BJ (cell line): ENCODE measurements at regions of chr4 and their contacts with region 1.

Region 1: DNA sequence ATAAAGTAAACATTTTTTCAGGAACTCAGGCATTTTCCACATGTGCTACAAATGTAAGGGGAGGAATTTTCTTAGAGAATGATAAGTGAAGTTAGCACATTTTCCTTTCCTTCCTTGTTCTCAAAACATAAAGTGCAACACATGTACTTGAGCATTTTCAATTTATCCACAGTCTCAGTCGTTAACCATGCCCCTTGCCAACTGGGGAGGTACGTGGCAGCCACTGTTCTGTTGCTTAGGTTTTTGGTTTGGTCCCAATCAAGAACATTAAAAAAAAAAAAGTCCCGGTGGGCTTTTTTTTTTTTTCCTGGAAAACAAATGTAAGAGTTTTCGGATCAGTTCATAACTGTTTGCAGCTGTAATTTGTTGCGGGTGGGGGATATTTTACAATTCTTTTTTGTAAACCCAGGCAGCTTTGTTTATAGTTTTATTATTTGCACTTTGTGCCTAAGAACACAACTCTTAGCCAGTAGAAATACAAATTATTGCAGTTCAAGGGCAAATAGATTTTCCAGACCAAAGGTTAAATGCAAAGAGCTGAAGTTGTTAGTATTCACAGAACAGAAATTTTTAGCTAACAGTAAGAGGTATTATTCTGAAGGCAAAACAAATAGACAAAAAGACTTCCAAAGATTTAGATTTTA is 112.1 kb upstream of the NAP1L5 start:
- DNase-seq: no peak
- H3K4me3 ChIP-seq: no peak overlapping the region
- H3K27me3 ChIP-seq: no peaks in the 10 kb centered on the region
- CTCF ChIP-seq: no peak

Region 2: DNA sequence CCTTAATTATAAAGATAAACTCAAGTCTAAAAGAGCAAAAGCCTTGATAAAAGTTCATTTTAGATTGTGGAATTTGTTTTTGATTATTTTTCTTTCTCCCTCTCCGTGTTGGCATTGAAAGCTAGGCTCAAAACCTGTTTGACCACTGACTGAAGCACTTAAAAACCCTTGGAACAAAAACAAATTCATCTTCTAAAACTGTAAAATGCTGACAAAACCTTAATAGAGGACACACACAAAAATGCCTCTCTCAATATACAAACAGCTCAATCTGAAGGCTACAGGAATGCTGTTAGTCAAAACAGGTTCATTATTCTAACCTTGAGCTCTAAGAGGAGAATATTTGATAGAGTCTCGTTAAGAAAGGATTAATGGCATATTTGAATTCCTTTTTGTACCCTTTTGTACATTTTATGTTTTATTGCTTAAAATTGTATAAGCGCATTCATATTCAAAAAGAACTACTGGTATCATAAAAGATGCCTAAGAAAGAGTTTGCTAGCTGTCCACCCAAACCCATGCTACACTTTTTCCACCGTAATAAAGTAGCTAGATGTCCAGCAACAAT is 37.7 kb before region 1 on chr4:
- CTCF ChIA-PET with region 1: no interaction called
- POLR2A ChIA-PET with region 1: interaction called, 25 read pairs
- DNase-seq: no peak
- H3K4me3 ChIP-seq: no peak overlapping the region
- H3K27me3 ChIP-seq: no peaks in the 10 kb centered on the region
- CTCF ChIP-seq: no peak

Region 3: GRCh38 chr4:88880501-88881226 is 71.0 kb after region 1 on chr4:
- CTCF ChIA-PET with region 1: no interaction called
- POLR2A ChIA-PET with region 1: no interaction called
- DNase-seq: no peak
- H3K4me3 ChIP-seq: no peak overlapping the region
- H3K27me3 ChIP-seq: no peaks in the 10 kb centered on the region
- CTCF ChIP-seq: no peak

Region 4: DNA sequence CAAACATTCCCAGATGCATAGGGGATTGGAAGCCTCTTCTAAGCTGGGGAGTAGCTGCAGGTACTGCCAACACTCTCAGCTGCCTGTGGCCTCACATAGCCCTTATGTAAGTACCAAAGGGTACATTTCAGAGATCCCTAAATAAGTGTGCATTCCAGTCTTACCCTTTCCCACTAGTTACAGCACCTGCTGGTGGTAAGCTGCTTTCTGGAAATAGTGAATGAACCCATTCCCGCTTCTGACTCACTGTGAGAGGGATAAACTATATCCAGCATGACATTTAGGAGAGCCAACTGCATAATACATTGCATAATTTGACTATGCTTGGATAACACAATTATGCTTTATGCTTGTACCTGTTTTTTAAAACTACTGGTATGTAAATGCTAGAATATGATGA is 98.3 kb after region 1 on chr4:
- CTCF ChIA-PET with region 1: no interaction called
- POLR2A ChIA-PET with region 1: no interaction called
- DNase-seq: no peak
- H3K4me3 ChIP-seq: no peak overlapping the region
- H3K27me3 ChIP-seq: no peaks in the 10 kb centered on the region
- CTCF ChIP-seq: no peak

Region 5: DNA sequence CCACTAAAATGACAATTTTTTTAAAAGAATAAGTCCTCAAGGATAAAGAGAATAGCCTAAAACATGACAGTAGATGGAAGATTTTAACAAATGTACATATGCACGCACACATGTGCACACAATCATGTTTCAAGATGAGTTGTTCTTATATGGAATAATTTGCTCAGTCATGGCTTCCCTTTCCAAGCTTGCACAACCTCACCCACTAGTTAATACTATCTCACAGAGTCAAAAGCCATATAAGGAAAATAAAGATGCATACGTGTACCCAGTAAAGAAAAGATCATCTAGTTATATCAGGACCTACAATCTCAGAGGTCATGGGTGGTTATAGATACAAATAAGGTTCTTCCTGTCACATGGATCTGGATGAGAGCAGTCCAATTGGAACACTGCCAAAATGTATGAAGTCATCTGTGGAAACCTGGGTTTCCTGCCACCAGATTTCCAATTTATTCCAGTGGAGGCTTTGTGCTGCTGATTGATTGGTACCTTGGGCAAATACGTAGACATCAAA is 191.2 kb after region 1 on chr4:
- CTCF ChIA-PET with region 1: no interaction called
- POLR2A ChIA-PET with region 1: no interaction called
- DNase-seq: no peak
- H3K4me3 ChIP-seq: no peak overlapping the region
- H3K27me3 ChIP-seq: no peaks in the 10 kb centered on the region
- CTCF ChIP-seq: no peak

Region 6: GRCh38 chr4:89992744-89993143 is 1183.0 kb after region 1 on chr4:
- CTCF ChIA-PET with region 1: no interaction called
- POLR2A ChIA-PET with region 1: no interaction called
- DNase-seq: no peak
- H3K4me3 ChIP-seq: no peak overlapping the region
- H3K27me3 ChIP-seq: no peaks in the 10 kb centered on the region
- CTCF ChIP-seq: no peak